Heart right ventricle (tissue), 16 donors: ENCODE measurements at regions of chr12 and their contacts with region 1.

Region 1: GRCh38 chr12:32379667-32380066 is 19.7 kb upstream of the FGD4 start:
- DNase-seq: no peak
- ATAC-seq: no peak
- H3K4me3 ChIP-seq: no peak overlapping the region
- H3K27ac ChIP-seq: no peak overlapping the region
- H3K4me1 ChIP-seq: no peaks in the 10 kb centered on the region
- H3K27me3 ChIP-seq: no peaks in the 10 kb centered on the region
- CTCF ChIP-seq: no peak

Region 2: DNA sequence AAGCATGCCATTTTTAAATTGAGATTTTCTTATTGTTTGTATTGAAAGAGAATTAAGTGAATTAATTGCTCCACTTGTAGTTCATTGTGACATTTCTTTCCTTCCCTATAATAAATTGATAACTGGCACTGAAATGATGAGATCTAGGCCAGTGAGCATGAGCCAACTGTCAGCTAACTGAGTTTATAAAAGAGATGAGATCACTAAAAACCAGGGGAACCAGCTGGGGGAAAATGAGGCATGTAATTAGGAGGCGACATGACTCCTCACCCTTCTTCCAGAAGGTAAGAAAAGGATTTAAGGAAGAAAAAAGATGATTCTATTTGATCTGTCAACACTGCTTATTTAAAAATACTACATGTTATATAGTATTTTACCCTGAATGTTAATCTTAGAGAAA is 194.9 kb after region 1 on chr12:
- intact Hi-C with region 1: loop called in 1 of 10 experiments (anchors 5 kb)
- DNase-seq: no peak
- ATAC-seq: no peak
- H3K4me3 ChIP-seq: no peak overlapping the region
- H3K27ac ChIP-seq: no peak overlapping the region
- H3K4me1 ChIP-seq: peaks cover 0 to 44% (median 25%) of the 10 kb centered on the region in 9 donors
- H3K27me3 ChIP-seq: no peaks in the 10 kb centered on the region
- CTCF ChIP-seq: no peak